GM12878 (cell line): ENCODE measurements at regions of chr1 and their contacts with region 1.

Region 1: GRCh38 chr1:205141236-205142101 is 19.7 kb upstream of the RBBP5 start:
- DNase-seq: peak; percentile 30
- ATAC-seq: peak; percentile 97
- H3K4me3 ChIP-seq: no peak overlapping the region
- H3K27ac ChIP-seq: no peak overlapping the region
- H3K4me1 ChIP-seq: peaks cover 4% of the 10 kb centered on the region; the same call in 1 of the 2 replicates
- H3K27me3 ChIP-seq: no peaks in the 10 kb centered on the region
- CTCF ChIP-seq: peak; percentile 70 to 79 (median 72)
- EP300 ChIP-seq: no peak
- POLR2A ChIP-seq: no peak
- RAD21 ChIP-seq: peak; percentile 59

Region 2: DNA sequence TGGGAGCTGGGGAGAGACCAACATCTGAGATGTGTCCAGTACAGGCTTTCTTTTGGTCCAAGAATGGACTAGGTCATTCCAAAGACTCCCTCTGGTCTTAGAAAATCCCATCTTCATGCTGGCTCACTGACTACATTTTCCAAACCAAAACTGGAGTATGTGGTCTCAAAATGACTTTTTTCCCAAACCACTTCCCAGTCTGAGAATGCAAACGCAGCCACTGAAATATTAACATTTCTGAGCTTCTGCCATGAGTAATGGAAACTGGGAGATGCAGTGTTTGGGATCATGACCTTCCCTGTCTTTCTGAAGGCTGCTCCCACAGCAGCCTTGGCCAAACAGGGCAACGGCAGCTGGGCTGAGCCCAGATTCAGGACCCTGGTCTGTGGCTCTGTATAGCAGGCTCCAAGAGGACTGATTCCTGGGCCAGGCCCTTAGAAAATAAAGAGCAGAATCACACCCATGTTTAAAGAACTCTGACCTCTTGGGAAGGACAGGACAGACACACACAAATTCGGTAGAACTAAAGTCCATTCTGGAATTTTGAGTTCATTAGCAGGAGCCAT is 160.5 kb before region 1 on chr1:
- CTCF ChIA-PET with region 1: interaction called, 17 read pairs
- POLR2A ChIA-PET with region 1: no interaction called
- RAD21 ChIA-PET with region 1: interaction called, 4 read pairs
- SMC1A ChIA-PET with region 1: interaction called, 12 read pairs
- in situ Hi-C with region 1: loop called (anchors 5 kb)
- intact Hi-C with region 1: no loop called
- DNase-seq: no peak
- ATAC-seq: no peak
- H3K4me3 ChIP-seq: no peak overlapping the region
- H3K27ac ChIP-seq: no peak overlapping the region
- H3K4me1 ChIP-seq: peaks cover 6% of the 10 kb centered on the region
- H3K27me3 ChIP-seq: peaks cover 0 to 2% of the 10 kb centered on the region in 2 experiments; a peak in 2 of 4 replicates
- CTCF ChIP-seq: no peak
- EP300 ChIP-seq: no peak
- POLR2A ChIP-seq: no peak
- RAD21 ChIP-seq: no peak

Region 3: DNA sequence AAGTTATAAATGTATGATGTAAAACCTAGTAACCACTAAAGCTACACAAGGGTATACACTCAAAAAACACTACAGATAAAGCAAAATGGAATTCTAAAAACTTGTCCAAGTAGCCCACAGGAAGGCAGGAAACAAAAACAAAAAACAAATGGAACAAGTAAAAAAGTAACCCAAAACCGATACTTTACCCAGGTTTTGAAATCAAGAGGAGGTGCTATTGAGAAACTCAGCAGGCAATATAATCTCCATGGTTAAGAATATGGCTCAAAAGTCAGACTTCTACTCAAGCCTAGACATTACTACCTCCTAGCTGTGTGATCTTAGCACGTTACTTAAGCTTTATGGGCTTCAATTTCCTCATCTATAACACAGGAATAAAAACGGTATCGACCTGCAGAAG is 33.0 kb before region 1 on chr1:
- CTCF ChIA-PET with region 1: interaction called, 13 read pairs
- POLR2A ChIA-PET with region 1: no interaction called
- RAD21 ChIA-PET with region 1: no interaction called
- SMC1A ChIA-PET with region 1: interaction called, 7 read pairs
- in situ Hi-C with region 1: no loop called
- intact Hi-C with region 1: no loop called
- DNase-seq: no peak
- ATAC-seq: no peak
- H3K4me3 ChIP-seq: no peak overlapping the region
- H3K27ac ChIP-seq: no peak overlapping the region
- H3K4me1 ChIP-seq: no peaks in the 10 kb centered on the region
- H3K27me3 ChIP-seq: no peaks in the 10 kb centered on the region
- CTCF ChIP-seq: no peak
- EP300 ChIP-seq: no peak
- POLR2A ChIP-seq: no peak
- RAD21 ChIP-seq: no peak

Region 4: DNA sequence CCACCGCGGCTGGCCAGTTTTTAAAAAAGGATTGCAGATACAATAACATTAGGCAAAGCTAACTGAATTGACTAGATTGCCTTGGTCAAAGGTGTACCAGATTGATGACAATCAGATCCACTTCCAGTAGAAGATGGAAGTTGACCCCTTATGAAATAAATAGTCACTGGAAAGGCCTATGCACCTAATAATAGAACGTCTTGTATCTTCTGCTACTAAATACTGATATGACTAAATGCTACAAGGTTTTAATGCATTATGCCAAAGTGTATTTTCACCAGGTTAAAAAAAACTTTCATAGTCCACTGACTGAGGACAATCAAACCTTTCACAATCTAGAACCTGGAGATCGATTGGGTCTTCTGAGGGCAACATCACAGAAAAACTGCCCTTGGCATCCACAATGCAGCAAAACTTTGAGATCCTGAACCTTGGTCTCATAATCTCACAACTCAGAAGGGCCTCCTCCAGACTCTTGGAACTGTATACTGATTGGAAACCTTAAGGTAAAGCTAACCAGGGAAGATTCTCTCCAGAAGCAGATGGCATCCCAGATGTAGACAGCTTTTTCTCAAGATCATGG is 11.9 kb before region 1 on chr1:
- CTCF ChIA-PET with region 1: interaction called, 88 read pairs
- POLR2A ChIA-PET with region 1: interaction called, 8 read pairs
- RAD21 ChIA-PET with region 1: interaction called, 6 read pairs
- SMC1A ChIA-PET with region 1: interaction called, 8 read pairs
- in situ Hi-C with region 1: no loop called
- intact Hi-C with region 1: no loop called
- DNase-seq: no peak
- ATAC-seq: no peak
- H3K4me3 ChIP-seq: no peak overlapping the region
- H3K27ac ChIP-seq: no peak overlapping the region
- H3K4me1 ChIP-seq: no peaks in the 10 kb centered on the region; the same call in 1 of the 2 replicates
- H3K27me3 ChIP-seq: no peaks in the 10 kb centered on the region
- CTCF ChIP-seq: no peak
- EP300 ChIP-seq: no peak
- POLR2A ChIP-seq: no peak
- RAD21 ChIP-seq: no peak

Region 5: GRCh38 chr1:205199090-205199930 is 57.8 kb after region 1 on chr1:
- CTCF ChIA-PET with region 1: interaction called, 12 read pairs
- POLR2A ChIA-PET with region 1: no interaction called
- RAD21 ChIA-PET with region 1: interaction called, 7 read pairs
- SMC1A ChIA-PET with region 1: interaction called, 8 read pairs
- in situ Hi-C with region 1: no loop called
- intact Hi-C with region 1: no loop called
- DNase-seq: no peak
- ATAC-seq: peak; percentile 67
- H3K4me3 ChIP-seq: no peak overlapping the region
- H3K27ac ChIP-seq: no peak overlapping the region
- H3K4me1 ChIP-seq: peaks cover 3% of the 10 kb centered on the region; the same call in 1 of the 2 replicates
- H3K27me3 ChIP-seq: no peaks in the 10 kb centered on the region
- CTCF ChIP-seq: peak in 1 of 3 experiments; percentile 13; a peak in 1 of 6 replicates
- EP300 ChIP-seq: no peak
- POLR2A ChIP-seq: no peak
- RAD21 ChIP-seq: peak; percentile 20; the same call in 1 of the 2 replicates